Aorta (tissue), 5 donors: ENCODE measurements at regions of chr18 and their contacts with region 1.

Region 1: DNA sequence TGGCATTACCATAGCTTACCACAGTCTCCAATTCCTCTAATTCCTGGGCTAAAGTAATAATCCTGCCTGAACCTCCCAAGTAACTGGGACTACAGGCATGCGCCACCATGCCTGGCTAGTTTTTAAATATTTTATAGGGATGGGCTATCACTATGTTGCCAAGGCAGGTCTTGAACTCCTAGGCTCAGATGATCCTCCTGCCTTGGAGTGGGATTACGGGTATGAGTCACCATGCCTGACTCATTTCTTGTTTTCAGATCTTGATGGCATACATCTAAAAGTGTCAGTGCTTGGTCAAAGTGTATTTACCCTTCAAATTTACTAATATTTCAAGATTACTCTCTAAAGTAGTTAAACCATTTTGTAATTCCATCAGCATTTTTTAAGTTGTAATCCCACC is 9.4 kb upstream of the SOCS6 start:
- DNase-seq: no peak
- ATAC-seq: no peak
- H3K4me3 ChIP-seq: no peak overlapping the region
- H3K27ac ChIP-seq: no peak overlapping the region
- H3K4me1 ChIP-seq: no peaks in the 10 kb centered on the region
- H3K27me3 ChIP-seq: no peaks in the 10 kb centered on the region

Region 2: GRCh38 chr18:69968039-69968438 is 311.4 kb before region 1 on chr18:
- intact Hi-C with region 1: no loop called
- DNase-seq: no peak
- ATAC-seq: no peak
- H3K4me3 ChIP-seq: no peak overlapping the region
- H3K27ac ChIP-seq: no peak overlapping the region
- H3K4me1 ChIP-seq: no peaks in the 10 kb centered on the region
- H3K27me3 ChIP-seq: no peaks in the 10 kb centered on the region

Region 3: DNA sequence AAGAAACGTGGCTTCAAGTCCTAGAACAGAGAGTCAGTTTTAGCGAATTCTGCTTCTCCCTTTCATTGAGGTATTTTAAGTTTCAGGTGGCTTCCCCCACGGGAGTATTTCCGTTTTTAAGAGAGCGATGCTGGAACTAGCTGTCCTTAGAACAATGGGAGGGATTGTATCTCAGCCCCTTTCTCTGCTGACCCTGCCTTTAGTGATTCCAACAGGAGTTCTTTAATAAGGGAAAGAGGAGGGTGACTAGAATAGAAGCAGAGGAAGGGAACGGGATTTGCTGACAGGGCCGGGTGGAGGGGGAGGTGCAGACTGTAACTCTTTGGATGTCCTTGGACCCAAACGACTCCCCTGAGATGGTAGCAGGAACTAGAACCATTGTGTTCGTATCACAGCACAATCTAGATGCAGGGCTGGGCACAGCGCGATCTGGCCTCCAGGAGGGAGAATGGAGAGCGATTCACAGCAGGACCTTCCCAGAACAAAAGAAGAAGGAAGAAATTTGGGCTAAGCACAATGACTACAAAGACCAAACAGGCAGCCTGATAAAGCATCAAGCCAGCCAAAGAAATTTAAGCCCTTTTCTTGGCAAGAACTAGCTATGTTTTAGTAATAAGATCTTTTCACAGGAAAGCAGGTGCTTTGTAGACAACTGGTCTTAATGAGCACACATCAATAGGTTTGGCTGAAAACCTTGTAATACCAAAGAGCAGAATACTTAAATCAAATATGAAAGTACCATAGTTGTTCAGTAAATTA is 58.1 kb before region 1 on chr18:
- intact Hi-C with region 1: loop called in 1 of 2 experiments (anchors 10 kb)
- DNase-seq: peak in 1 of 2 donors; percentile 30
- ATAC-seq: no peak
- H3K4me3 ChIP-seq: no peak overlapping the region
- H3K27ac ChIP-seq: no peak overlapping the region
- H3K4me1 ChIP-seq: no peaks in the 10 kb centered on the region
- H3K27me3 ChIP-seq: no peaks in the 10 kb centered on the region